Tibial artery (tissue), 4 donors: ENCODE measurements at regions of chr12 and their contacts with region 1.

Region 1: DNA sequence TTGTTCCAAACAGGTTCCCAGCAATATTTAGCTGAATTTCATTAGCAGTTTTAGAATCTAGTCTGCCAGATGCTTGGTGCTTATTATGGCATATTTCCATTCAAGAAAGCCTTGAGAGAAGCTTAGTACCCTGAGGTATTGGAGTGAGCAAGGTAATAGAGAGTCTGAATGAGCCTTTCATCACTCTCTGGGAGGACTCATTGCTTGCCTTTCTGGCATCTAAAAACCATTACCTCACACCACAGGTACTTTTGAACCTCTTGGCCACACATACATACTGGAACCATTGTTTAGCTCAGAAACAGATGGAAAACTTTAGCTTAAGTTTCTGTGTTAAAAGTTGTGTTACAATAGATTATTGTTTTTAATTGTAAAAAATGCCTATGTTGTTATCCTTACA is 27.4 kb upstream of the KCNH3 start:
- DNase-seq: no peak
- H3K4me3 ChIP-seq: no peak overlapping the region
- H3K27ac ChIP-seq: no peak overlapping the region
- H3K4me1 ChIP-seq: no peaks in the 10 kb centered on the region
- H3K27me3 ChIP-seq: no peaks in the 10 kb centered on the region
- CTCF ChIP-seq: no peak

Region 2: GRCh38 chr12:49358483-49359141 is 152.8 kb before region 1 on chr12:
- intact Hi-C with region 1: loop called (anchors 2 kb)
- DNase-seq: peak; percentile 54 to 60
- H3K4me3 ChIP-seq: no peak overlapping the region
- H3K27ac ChIP-seq: no peak overlapping the region
- H3K4me1 ChIP-seq: peaks cover 0 to 8% (median 3%) of the 10 kb centered on the region in 4 donors
- H3K27me3 ChIP-seq: peaks cover 0 to 18% of the 10 kb centered on the region in 2 donors
- CTCF ChIP-seq: peak; percentile 78

Region 3: GRCh38 chr12:49403971-49404450 is 107.4 kb before region 1 on chr12:
- intact Hi-C with region 1: no loop called
- DNase-seq: no peak
- H3K4me3 ChIP-seq: no peak overlapping the region
- H3K27ac ChIP-seq: no peak overlapping the region
- H3K4me1 ChIP-seq: no peaks in the 10 kb centered on the region
- H3K27me3 ChIP-seq: no peaks in the 10 kb centered on the region
- CTCF ChIP-seq: no peak